ENCODE measurements at regions of chr13 and their contacts with region 1.

Region 1: DNA sequence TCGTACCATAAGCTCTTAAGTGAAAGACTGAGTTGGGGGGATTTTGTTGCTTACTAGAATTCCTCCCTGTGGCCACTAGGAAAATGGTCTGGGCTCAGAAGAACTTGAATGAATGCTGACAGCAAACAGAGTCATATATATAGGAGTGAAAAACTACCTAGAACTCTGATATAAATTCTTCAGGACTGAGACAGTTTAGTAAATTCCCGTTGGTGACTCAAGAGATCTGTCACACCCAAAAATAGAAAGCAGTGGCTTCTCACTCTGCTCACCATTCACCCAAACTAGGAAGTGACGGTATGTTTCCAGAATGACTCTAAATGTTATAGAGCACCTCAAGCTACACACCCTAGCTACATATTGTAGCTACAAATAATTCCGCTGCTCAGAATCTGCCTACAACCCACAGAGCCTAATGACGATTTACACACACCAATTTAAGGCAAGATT is 116.2 kb downstream of the TBC1D4 start:
- DNase-seq: peak in 1 of 2 donors; percentile 31
- ATAC-seq: peak; percentile 89 to 96 (median 93)
- H3K4me3 ChIP-seq: no peak overlapping the region
- H3K4me3 Mint-ChIP-seq: peak overlapping the region; percentile 82
- H3K27ac ChIP-seq: peak overlapping the region; percentile 38
- H3K27ac Mint-ChIP-seq: peak overlapping the region; percentile 80 to 91
- H3K4me1 ChIP-seq: peaks cover 3% of the 10 kb centered on the region
- H3K4me1 Mint-ChIP-seq: peaks cover 18% of the 10 kb centered on the region in 2 donors
- H3K27me3 ChIP-seq: no peaks in the 10 kb centered on the region
- H3K27me3 Mint-ChIP-seq: no peaks in the 10 kb centered on the region
- CTCF ChIP-seq: no peak

Region 2: GRCh38 chr13:75482070-75482819 is 116.5 kb after region 1 on chr13 and contains the start of gene TBC1D4:
- intact Hi-C with region 1: loop called (anchors 5 kb)
- DNase-seq: peak; percentile 42 to 66
- ATAC-seq: peak; percentile 80 to 86 (median 81)
- H3K4me3 ChIP-seq: peak within 1 kb of the TSS; percentile 56
- H3K4me3 Mint-ChIP-seq: peak within 1 kb of the TSS; percentile 99
- H3K27ac ChIP-seq: no peak within 1 kb of the TSS
- H3K27ac Mint-ChIP-seq: peak within 1 kb of the TSS; percentile 12 to 82
- H3K4me1 ChIP-seq: peaks cover 23% of the 10 kb centered on the region
- H3K4me1 Mint-ChIP-seq: peaks cover 30% of the 10 kb centered on the region in 2 donors
- H3K27me3 ChIP-seq: peaks cover 16% of the 10 kb centered on the region
- H3K27me3 Mint-ChIP-seq: peaks cover 27 to 32% of the 10 kb centered on the region in 2 donors
- CTCF ChIP-seq: peak; percentile 62
- total RNA-seq, gene TBC1D4: 0.54 to 5.1 (median 3.7) TPM

Region 3: DNA sequence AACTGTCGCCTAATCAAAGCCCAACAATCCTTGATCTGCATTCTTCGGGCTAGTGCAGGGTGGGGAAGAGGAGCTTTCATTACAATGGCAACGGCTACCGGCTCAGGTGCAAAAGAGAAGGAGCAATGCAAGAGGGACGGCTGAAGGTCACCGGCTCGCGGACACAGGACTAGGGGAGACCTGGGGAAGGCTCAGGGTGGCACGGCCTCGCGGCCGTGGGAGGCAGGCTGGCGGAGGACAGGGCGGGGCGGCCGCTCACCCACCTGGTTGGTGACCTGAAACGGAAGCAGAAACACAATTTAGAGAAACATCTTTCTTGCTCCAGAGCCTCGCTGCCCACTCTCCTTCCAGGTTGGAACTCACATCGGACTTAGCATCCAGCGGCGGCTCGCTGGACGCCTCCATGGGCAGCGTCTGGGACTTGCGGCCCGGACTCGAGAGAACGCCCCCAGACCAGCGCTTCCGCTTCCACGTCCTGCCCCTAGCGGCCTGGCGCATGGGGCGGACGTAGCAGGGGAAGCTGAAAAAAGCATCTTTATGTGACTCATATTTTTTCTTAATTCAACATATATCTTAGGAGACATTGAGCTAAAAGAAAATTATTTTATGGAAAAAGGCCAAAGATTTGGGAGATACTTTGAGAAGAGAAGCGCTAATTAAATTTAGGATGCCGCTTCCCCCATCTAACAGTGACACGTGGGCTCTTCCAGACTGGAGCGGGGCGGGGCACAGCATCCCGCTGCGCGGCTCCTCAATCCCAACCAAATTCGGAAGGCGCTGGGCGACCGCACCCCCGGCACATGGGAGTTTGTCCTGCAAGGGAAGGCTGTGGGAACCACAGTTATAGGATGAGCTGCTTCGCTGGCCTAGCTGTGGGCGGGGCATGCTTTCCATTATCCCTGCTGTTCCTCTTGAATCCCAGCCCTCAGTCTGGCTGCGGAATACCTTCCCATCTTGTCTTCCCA is 171.9 kb after region 1 on chr13 and contains the start of gene COMMD6:
- intact Hi-C with region 1: loop called (anchors 5 kb)
- DNase-seq: peak; percentile 68 to 84
- ATAC-seq: peak; percentile 94 to 95 (median 94)
- H3K4me3 ChIP-seq: peak within 1 kb of the TSS; percentile 90
- H3K4me3 Mint-ChIP-seq: peak within 1 kb of the TSS; percentile 100
- H3K27ac ChIP-seq: peak within 1 kb of the TSS; percentile 48
- H3K27ac Mint-ChIP-seq: peak within 1 kb of the TSS; percentile 90 to 99
- H3K4me1 ChIP-seq: peaks cover 9% of the 10 kb centered on the region
- H3K4me1 Mint-ChIP-seq: peaks cover 42 to 43% of the 10 kb centered on the region in 2 donors
- H3K27me3 ChIP-seq: no peaks in the 10 kb centered on the region
- H3K27me3 Mint-ChIP-seq: peaks cover 0 to 2% of the 10 kb centered on the region in 2 donors
- CTCF ChIP-seq: peak; percentile 30
- total RNA-seq, gene COMMD6: 111 to 149 (median 118) TPM